ENCODE measurements at regions of chr5 and their contacts with region 1.

Region 1: GRCh38 chr5:169980418-169981053 is at the start of gene INSYN2B:
- DNase-seq: peak; percentile 84
- ATAC-seq: peak; percentile 89
- H3K4me3 Mint-ChIP-seq: peak within 1 kb of the TSS; percentile 69
- H3K27ac Mint-ChIP-seq: peak within 1 kb of the TSS; percentile 70
- H3K4me1 Mint-ChIP-seq: peaks cover 50% of the 10 kb centered on the region
- H3K27me3 Mint-ChIP-seq: peaks cover 36% of the 10 kb centered on the region
- CTCF ChIP-seq: peak; percentile 46
- total RNA-seq, gene INSYN2B: not detected in 3 replicates

Region 2: GRCh38 chr5:169701910-169702451 is 278.6 kb before region 1 on chr5:
- CTCF ChIA-PET with region 1: interaction called, 50 read pairs
- POLR2A ChIA-PET with region 1: interaction called, 3 read pairs
- DNase-seq: no peak
- ATAC-seq: peak; percentile 70
- H3K4me3 Mint-ChIP-seq: no peak overlapping the region
- H3K27ac Mint-ChIP-seq: no peak overlapping the region
- H3K4me1 Mint-ChIP-seq: peaks cover 10% of the 10 kb centered on the region
- H3K27me3 Mint-ChIP-seq: no peaks in the 10 kb centered on the region
- CTCF ChIP-seq: no peak

Region 3: DNA sequence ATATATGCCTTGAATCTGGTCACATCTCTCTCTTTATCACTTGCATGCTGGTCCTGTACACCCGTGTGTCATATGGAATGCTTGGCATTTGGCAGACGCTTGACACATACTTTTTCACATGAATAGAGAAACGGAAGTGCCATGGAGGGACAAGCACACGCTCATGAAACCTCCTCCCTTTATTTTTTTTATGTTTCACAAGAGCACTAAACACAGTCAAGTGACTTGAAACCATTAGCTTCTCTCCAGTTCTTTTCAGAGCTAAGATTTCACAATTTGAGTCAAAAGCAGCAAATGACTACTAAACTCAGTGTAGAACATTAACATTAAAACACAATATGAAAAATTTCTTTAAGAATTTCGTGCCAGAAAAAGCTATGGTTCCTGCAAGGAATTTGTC is 192.4 kb before region 1 on chr5:
- CTCF ChIA-PET with region 1: no interaction called
- POLR2A ChIA-PET with region 1: no interaction called
- DNase-seq: no peak
- ATAC-seq: no peak
- H3K4me3 Mint-ChIP-seq: no peak overlapping the region
- H3K27ac Mint-ChIP-seq: no peak overlapping the region
- H3K4me1 Mint-ChIP-seq: no peaks in the 10 kb centered on the region
- H3K27me3 Mint-ChIP-seq: no peaks in the 10 kb centered on the region
- CTCF ChIP-seq: no peak

Region 4: DNA sequence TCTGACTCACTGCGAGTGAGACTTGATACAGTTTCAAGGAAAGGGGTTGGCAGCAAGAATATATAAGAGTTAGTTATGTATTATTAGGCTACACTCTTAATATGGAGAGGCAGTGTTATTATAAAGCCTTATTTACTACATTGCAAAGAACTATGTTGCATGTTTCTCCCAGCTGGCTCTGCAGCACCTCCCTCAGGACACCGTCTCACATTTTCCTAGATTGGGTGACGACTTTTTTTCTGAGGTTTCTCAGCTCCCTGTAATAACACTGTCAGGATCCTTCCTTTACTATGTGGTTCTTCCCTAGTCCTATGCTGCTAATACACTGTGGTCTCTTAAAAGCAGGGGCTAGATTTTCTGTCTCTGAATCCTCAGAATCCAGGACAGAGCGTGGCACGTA is 153.9 kb before region 1 on chr5:
- CTCF ChIA-PET with region 1: interaction called, 18 read pairs
- POLR2A ChIA-PET with region 1: no interaction called
- DNase-seq: peak; percentile 15
- ATAC-seq: peak; percentile 79
- H3K4me3 Mint-ChIP-seq: no peak overlapping the region
- H3K27ac Mint-ChIP-seq: no peak overlapping the region
- H3K4me1 Mint-ChIP-seq: peaks cover 7% of the 10 kb centered on the region
- H3K27me3 Mint-ChIP-seq: 0 out of 2 replicates have a peak, but pooled peaks cover under 1% of the 10 kb centered on the region
- CTCF ChIP-seq: no peak

Region 5: DNA sequence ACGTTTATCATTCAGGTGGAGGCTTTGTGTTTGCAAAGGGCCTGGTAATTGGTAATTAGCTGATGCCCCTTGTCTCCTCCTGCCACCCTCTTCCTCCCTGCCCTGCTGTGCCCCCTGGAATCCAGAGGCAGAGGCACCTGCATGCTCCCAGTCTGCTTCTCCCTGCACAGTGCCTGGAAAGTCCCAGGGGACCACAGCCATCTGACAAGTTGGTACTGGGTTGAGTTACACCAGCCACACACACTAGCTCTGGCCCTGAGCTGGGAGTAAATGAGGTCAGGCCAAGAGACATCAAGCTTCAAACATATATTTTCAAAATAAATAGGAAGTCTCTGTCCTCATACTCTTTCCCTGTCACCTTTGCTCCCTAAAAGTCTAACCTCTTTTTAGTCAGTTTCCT is 56.5 kb before region 1 on chr5:
- CTCF ChIA-PET with region 1: interaction called, 25 read pairs
- POLR2A ChIA-PET with region 1: no interaction called
- DNase-seq: no peak
- ATAC-seq: no peak
- H3K4me3 Mint-ChIP-seq: no peak overlapping the region
- H3K27ac Mint-ChIP-seq: no peak overlapping the region
- H3K4me1 Mint-ChIP-seq: peaks cover 6% of the 10 kb centered on the region; the same call in 1 of the 2 replicates
- H3K27me3 Mint-ChIP-seq: no peaks in the 10 kb centered on the region
- CTCF ChIP-seq: no peak

Region 6: GRCh38 chr5:169964246-169964645 is 16.3 kb before region 1 on chr5:
- CTCF ChIA-PET with region 1: interaction called, 15 read pairs
- POLR2A ChIA-PET with region 1: no interaction called
- DNase-seq: no peak
- ATAC-seq: no peak
- H3K4me3 Mint-ChIP-seq: no peak overlapping the region
- H3K27ac Mint-ChIP-seq: no peak overlapping the region
- H3K4me1 Mint-ChIP-seq: peaks cover 15% of the 10 kb centered on the region
- H3K27me3 Mint-ChIP-seq: no peaks in the 10 kb centered on the region
- CTCF ChIP-seq: no peak

Region 7: GRCh38 chr5:170070556-170071412 is 90.2 kb after region 1 on chr5:
- CTCF ChIA-PET with region 1: interaction called, 13 read pairs
- POLR2A ChIA-PET with region 1: interaction called, 3 read pairs
- DNase-seq: peak; percentile 83
- ATAC-seq: peak; percentile 95
- H3K4me3 Mint-ChIP-seq: no peak overlapping the region
- H3K27ac Mint-ChIP-seq: no peak overlapping the region
- H3K4me1 Mint-ChIP-seq: peaks cover 17% of the 10 kb centered on the region
- H3K27me3 Mint-ChIP-seq: no peaks in the 10 kb centered on the region; the same call in 1 of the 2 replicates
- CTCF ChIP-seq: peak; percentile 91

Region 8: GRCh38 chr5:170267431-170268152 is 287.1 kb after region 1 on chr5:
- CTCF ChIA-PET with region 1: no interaction called
- POLR2A ChIA-PET with region 1: no interaction called
- DNase-seq: peak; percentile 84
- ATAC-seq: peak; percentile 88
- H3K4me3 Mint-ChIP-seq: no peak overlapping the region
- H3K27ac Mint-ChIP-seq: no peak overlapping the region
- H3K4me1 Mint-ChIP-seq: peaks cover 57% of the 10 kb centered on the region
- H3K27me3 Mint-ChIP-seq: peaks cover 4% of the 10 kb centered on the region; the same call in 1 of the 2 replicates
- CTCF ChIP-seq: peak; percentile 81